AG04450 (cell line): ENCODE measurements at regions of chr3 and their contacts with region 1.

Region 1: GRCh38 chr3:151925876-151926275 is 52.4 kb downstream of the SUCNR1 start:
- DNase-seq: peak; percentile 45
- H3K4me3 ChIP-seq: no peak overlapping the region
- H3K27ac ChIP-seq: no peak overlapping the region
- H3K27me3 ChIP-seq: no peaks in the 10 kb centered on the region
- CTCF ChIP-seq: no peak

Region 2: DNA sequence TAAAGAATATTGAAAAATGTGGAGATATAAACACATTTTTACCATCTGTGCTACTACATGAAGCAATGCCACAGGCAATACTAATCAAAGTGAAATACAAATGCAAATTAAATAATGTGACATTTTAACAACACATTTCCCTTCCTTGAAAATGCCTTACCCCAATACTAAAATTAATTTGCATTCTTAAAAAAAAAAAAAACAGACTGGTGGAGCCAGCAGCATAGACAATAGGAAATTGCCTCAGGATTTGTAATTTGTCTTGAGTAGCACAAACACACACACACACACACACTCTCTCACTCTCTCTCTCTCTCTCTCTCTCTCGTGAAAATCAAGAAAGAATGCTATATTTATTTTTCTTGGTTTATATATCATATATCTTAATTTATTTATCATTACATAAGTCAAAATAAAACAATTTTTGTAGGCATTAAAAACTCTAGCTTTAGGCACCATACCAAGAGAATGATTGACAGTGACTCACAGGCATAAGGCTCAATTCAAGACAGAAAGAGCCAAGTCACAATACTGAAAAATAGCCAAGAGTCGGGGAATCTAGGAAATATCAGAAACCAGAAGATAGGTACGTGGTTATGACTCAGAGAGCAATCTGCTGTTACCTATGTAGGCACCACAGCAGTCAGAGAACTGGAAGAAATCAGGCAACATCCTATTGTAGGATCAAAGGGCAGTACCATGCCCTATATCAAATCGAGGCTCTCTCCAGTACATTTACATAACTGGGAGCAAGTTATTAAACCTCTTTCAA is 29.4 kb before region 1 on chr3:
- CTCF ChIA-PET with region 1: no interaction called
- POLR2A ChIA-PET with region 1: no interaction called
- DNase-seq: no peak
- H3K4me3 ChIP-seq: no peak overlapping the region
- H3K27ac ChIP-seq: no peak overlapping the region
- H3K27me3 ChIP-seq: no peaks in the 10 kb centered on the region
- CTCF ChIP-seq: no peak

Region 3: DNA sequence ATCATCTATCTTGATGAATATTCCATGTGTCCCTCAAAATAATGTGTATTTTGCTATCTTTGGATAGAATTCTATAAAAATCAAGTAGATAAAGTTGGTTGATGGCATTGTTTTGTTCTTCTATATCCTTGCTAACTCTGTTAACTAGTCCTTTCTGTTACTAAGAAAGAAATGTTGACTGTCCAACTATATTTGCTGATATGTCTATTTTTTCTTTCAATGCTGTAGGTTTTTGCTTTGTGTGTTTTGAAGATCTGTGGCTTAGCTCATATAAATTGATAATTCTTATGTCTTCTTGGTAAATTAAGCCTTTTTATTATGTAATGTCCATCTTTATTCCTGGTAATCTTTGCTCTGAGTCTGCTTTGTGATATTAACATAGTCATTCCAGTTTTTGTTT is 18.5 kb after region 1 on chr3:
- CTCF ChIA-PET with region 1: no interaction called
- POLR2A ChIA-PET with region 1: no interaction called
- DNase-seq: no peak
- H3K4me3 ChIP-seq: no peak overlapping the region
- H3K27ac ChIP-seq: no peak overlapping the region
- H3K27me3 ChIP-seq: no peaks in the 10 kb centered on the region
- CTCF ChIP-seq: no peak

Region 4: DNA sequence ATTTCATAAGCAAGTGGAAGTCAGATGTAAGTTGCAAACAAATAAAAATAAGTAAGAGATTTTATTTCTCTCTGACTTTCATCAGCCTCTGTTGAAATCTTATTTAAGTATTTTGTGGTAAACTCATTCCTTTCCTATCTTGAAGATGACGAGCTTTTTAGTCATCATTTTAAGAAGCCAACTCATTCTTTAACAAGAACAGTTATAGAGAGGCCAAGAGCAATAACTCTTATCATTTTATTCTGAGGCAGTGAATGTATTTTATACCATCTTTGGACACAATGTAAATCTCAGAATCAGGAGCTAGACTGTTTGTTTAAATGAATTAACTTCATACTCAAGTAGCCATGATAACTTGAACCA is 195.4 kb after region 1 on chr3:
- CTCF ChIA-PET with region 1: no interaction called
- POLR2A ChIA-PET with region 1: interaction called, 10 read pairs
- DNase-seq: peak; percentile 54
- H3K4me3 ChIP-seq: no peak overlapping the region
- H3K27ac ChIP-seq: no peak overlapping the region
- H3K27me3 ChIP-seq: no peaks in the 10 kb centered on the region
- CTCF ChIP-seq: no peak